ENCODE measurements at regions of chr6 and their contacts with region 1.

Region 1: DNA sequence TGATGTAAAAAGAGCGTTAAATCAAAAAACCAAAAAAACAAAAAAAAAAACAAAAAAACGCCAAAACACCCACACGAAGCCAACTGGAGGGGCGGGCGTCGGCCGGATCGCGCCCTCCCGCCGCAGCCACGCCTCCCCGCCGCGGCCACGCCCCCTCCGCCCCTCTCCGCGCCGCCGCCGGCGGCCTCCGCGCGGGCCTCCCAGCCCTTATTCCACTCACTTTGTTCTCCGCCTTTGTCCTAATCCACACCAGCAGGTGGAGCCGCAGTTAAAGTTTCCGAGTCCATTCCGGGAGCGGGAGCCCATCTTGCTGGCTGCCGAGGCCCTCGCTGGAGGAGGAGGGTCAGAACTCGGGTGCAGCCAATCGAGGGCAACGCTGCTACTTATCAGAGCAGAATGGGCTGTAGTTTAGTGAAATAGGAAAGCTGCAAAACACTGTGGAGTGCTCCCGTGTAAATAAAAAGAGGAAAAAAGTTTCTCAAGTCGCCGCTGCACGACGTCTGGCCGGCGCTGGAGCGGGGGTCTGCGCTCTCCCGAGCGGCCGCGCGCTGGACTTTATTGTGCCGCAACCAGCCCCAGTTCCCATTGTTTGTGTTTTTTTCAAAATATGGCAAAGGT is at the start of gene ASF1A:
- DNase-seq: peak; percentile 97
- total RNA-seq, gene ASF1A: 18.8 TPM

Region 2: GRCh38 chr6:118934461-118935330 is 40.8 kb after region 1 on chr6 and contains the start of gene MCM9:
- intact Hi-C with region 1: loop called (anchors 1 kb)
- DNase-seq: peak; percentile 96
- total RNA-seq, gene MCM9: 6.8 TPM